ENCODE measurements at regions of chr6 and their contacts with region 1.

Region 1: GRCh38 chr6:127539272-127539671 is 20.1 kb upstream of the MTCL3 start:
- DNase-seq: no peak
- H3K4me3 Mint-ChIP-seq: no peak overlapping the region
- H3K27ac Mint-ChIP-seq: no peak overlapping the region
- H3K4me1 Mint-ChIP-seq: peaks cover 2% of the 10 kb centered on the region
- H3K27me3 Mint-ChIP-seq: peaks cover 24% of the 10 kb centered on the region

Region 2: GRCh38 chr6:127464881-127465459 is 74.3 kb before region 1 on chr6:
- CTCF ChIA-PET with region 1: interaction called, 17 read pairs
- POLR2A ChIA-PET with region 1: no interaction called
- DNase-seq: peak; percentile 67
- H3K4me3 Mint-ChIP-seq: no peak overlapping the region
- H3K27ac Mint-ChIP-seq: no peak overlapping the region
- H3K4me1 Mint-ChIP-seq: peaks cover 10% of the 10 kb centered on the region
- H3K27me3 Mint-ChIP-seq: no peaks in the 10 kb centered on the region